ENCODE measurements at regions of chr12 and their contacts with region 1.

Region 1: DNA sequence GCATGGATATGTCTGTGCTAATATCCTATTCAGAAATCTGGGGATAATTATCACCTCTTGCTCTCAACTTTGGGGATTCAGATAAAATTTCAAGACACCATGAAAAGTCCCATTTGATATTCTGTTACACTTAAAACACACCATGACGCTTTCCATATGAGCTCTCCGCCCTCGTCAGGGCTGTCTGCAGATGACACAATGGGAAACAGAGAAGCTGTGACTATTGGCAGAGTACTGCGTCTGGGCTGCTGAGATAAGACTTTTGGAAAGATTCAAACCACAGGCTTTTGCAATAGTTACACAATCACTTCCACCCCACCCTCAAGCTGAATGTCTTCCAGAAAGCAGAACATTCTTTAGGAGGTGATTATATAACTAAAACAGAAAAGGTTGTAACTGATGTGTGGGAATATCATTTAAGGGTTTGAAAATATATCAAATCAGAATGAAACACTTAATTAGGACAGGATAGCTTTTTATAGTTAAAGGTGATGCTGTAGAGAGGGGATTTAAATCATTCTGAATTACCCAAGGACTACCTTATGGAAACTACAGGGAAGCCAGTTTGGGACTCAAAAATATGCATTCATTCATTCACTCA is 75.3 kb upstream of the TMPO start:
- DNase-seq: peak; percentile 91
- H3K4me3 ChIP-seq: no peak overlapping the region
- H3K27me3 ChIP-seq: peaks cover 5% of the 10 kb centered on the region
- CTCF ChIP-seq: no peak

Region 2: GRCh38 chr12:98424726-98425401 is 15.2 kb before region 1 on chr12:
- CTCF ChIA-PET with region 1: interaction called, 24 read pairs
- POLR2A ChIA-PET with region 1: interaction called, 15 read pairs
- DNase-seq: peak; percentile 46
- H3K4me3 ChIP-seq: no peak overlapping the region
- H3K27me3 ChIP-seq: no peaks in the 10 kb centered on the region
- CTCF ChIP-seq: peak; percentile 68

Measured in BJ (cell line).